Posterior vena cava (tissue), 2 donors: ENCODE measurements at regions of chr12 and their contacts with region 1.

Region 1: DNA sequence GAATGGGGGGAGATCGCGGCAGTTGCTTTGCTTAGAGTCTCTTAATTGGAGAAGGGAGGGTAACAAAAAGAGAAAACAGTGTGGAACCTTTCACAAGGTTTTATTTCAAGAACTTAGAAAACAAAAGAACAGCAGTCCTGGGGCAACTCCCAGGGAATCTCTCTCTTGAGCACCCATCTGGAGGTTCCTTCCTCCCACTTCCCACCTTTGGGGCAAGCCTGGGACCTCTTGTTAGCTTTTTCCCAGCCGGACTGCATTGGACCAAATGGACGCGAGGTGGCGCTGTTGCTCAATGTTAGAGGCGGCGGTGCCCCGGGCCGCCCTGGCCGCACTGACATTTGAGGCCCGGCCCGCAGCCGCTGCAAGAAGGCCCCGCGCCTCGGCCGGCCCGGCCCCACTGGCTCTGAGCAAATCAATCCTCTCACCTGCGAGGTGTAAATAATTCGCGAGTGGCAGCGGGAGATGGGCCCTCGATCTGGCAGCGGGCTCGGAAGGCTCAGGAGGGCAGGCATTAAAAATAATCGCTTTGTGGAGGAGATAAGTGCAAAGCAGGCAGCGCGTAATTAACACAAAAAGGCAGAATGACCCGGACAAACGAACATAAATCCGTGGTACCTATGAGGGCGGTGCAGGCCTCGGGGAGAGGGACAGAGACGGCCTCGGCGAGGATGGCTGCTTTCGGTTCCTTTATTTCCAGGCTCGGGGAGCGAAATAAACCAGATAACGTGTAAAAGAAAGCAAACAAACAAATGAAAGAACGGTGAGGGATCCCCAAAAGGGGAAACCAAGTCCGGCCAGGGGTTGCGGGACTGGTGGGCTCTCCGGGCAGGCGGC is 2.7 kb upstream of the HOXC8 start:
- DNase-seq: peak; percentile 97

Region 2: GRCh38 chr12:54025499-54026405 is 19.7 kb after region 1 on chr12:
- intact Hi-C with region 1: loop called in 1 of 2 experiments (anchors 2 kb)
- DNase-seq: peak; percentile 45

Region 3: DNA sequence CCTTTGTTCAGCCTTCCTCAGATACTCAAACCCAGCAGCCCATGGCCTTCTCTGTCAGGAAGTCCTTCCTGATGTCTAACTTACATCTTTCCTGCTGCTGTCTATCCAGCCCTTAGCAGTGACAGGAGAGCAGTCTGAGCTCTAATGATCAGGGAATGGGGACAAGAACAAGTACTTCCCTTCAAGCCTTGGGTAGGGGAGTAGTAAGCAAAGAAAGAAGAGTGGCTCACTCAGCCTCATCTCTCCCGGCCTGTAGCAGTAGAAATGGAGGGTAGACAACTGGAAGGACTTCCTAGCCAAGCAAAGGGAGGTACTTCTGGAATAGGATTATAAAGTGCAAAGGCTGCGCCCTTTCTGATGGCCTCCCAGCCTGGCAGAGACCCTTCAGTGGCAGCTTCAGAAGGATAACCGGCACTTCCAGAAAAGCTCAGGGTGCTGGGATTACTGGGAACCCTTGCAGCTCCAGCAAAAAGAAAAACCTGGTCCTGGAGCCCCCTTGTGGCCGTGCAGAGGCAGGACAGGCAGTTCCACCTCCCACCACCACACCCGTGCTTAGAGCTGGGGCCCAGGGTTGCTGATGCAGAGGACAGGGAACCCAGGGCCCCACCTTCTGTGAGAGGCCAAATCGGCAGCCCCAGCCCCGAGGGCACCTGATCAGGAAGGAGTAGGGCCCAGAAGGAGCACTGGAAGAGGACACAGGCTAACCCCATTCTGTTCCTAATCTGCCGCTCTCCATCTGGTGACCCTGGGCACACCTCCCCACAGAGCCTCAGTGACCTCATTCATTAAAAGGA is 195.1 kb after region 1 on chr12:
- intact Hi-C with region 1: loop called (anchors 2 to 5 kb)
- DNase-seq: peak; percentile 88

Region 4: DNA sequence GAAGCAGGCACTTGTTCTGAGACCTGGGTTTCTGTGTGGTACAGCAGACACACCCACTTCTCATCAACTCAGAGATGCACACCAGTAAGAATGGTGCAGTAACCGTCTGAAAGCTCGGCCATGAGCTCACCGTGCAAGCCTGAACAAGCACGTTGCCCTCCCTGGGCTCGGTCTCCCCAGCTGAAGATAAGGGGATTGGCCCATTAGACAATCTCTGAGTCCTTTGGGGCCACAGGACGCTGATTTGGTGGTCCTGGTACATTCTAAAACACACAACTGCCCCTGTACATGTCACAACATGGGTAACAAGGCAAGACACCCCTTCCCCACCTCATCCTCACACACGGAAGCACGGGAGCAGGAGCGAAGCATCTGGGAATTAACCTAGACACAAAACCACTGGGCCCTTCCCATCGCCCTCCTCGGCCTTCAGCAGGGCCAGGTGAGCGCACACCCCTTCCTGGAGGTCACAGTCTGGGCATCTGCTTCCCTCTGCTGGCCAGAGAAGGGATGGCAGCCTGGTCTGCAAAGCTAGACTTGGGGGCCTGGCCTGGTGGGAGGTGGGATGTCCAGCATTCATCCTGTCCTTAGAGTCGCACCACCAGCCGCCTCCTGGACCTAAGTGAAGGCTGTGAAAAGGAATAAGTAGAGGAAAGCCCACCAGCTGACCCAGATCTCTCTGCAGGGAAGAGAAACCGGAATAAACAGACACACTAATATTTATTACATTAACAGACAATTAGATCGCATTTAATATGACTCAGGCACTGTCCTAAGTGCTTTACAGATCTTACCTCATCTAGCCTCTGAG is 201.6 kb after region 1 on chr12:
- intact Hi-C with region 1: loop called (anchors 2 to 5 kb)
- DNase-seq: peak; percentile 92

Region 5: GRCh38 chr12:54359033-54359761 is 353.1 kb after region 1 on chr12:
- intact Hi-C with region 1: loop called in 1 of 2 experiments (anchors 10 kb)
- DNase-seq: peak; percentile 97